Left ventricle myocardium superior (tissue), 1 donor: ENCODE measurements at regions of chr9 and their contacts with region 1.

Region 1: GRCh38 chr9:116860509-116861120 is 173.5 kb downstream of the TRIM32 start:
- DNase-seq: peak; percentile 69
- ATAC-seq: peak; percentile 81

Region 2: DNA sequence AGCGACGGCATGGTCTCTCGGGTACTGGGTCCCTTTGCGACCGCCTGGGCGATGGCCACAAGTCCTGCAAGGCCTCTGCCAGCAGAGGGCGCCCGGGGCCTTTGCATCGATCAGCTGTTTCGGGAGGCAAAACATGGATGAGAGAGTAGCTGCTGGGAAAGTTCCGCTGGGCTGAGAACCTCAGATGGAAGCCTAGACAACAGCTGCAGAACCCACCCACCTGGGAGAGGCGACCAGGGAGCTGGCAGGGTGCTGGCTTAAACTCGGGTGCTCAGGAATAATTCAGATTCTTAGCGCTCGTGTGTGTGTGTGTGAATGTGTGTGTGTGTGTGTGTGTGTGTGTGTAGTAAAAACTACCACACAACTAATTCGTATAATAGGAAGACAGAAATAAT is 123.5 kb before region 1 on chr9:
- intact Hi-C with region 1: loop called (anchors 10 kb)
- DNase-seq: peak; percentile 86
- ATAC-seq: peak; percentile 75

Region 3: GRCh38 chr9:116939614-116940013 is 79.0 kb after region 1 on chr9:
- intact Hi-C with region 1: no loop called
- DNase-seq: no peak
- ATAC-seq: no peak